ENCODE measurements at regions of chr15 and their contacts with region 1.

Region 1: DNA sequence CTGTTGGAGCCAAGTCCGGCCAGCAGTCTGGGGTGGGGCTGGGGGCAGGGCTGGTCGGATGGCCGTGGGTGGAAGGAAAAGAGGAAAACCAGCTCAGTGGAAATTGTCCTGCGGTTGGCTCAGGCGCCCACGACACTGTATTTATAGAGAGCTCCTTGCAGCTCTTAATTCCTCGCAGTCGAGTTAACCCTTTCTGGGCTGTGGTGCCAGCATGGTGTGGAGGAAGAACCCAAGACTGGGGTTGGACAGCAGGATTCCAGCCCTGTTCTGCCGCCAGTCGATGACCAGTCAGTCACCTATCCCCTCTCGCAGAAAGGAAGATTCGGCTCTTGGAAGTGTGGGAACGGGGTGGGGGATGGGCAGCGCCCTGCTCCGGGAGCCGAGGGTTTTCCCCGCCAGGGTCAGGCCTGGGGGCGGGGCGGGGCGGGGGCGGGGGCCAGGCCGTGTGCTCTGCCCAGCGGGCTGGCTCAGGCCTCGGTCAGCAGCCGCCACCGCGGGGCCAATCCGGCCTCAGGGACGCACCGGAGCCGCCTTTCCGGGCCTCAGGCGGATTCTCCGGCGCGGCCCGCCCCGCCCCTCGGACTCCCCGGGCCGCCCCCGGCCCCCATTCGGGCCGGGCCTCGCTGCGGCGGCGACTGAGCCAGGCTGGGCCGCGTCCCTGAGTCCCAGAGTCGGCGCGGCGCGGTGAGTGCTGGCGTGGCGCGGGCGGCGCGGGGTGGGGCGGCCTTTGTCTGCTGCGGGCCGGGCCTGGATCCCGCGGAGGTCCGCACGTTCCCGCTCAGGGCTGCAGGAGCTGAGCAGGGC is at the start of gene CD276:
- DNase-seq: no peak
- H3K4me3 ChIP-seq: peak within 1 kb of the TSS; percentile 84
- CTCF ChIP-seq: no peak

Region 2: DNA sequence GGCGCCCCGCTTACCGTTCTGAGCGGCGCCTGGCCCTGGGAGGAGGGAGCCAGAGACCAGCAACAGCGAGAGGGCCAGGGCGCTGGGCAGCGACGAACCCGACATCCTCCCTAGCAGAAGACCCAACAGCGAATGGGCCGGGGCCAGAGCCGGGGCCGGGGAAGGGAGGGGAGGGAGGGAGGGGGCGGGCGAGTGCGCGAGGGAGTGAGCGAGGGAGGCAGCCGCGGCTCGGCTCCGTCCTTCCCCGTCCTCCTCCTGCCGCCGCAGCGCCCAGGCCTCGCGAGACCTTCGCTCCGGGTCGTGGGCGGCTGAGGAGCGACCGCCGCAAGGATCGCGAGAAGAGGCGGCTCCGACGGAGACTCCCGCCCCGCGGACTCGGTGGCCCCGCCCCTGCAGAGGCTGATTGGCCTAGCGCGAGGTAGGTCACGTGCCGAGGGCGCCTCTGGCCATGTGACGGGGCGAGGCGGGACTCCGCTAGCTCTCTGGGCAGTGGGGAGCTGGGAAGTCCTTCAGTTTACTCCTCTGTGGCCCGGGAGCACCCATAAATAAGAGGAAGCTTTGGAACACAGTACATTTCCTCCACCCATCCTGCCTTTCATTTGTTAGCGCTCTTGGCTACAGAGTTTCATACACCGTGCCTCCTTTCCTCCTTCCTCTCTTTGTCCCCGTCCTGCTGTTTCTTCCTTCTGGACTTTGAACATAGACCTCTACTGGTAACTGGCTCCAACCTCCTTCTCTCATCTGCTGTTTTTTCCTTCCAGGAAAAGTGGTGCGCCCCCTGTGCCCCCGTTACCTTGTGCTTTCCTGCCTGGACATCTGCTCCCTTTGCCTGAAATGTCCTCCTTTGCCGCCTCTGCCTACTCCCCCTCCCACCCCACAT is 50.6 kb before region 1 on chr15 and contains the start of gene NPTN:
- in situ Hi-C with region 1: loop called (anchors 5 kb)
- DNase-seq: peak; percentile 92
- H3K4me3 ChIP-seq: peak within 1 kb of the TSS; percentile 83
- CTCF ChIP-seq: no peak

Region 3: DNA sequence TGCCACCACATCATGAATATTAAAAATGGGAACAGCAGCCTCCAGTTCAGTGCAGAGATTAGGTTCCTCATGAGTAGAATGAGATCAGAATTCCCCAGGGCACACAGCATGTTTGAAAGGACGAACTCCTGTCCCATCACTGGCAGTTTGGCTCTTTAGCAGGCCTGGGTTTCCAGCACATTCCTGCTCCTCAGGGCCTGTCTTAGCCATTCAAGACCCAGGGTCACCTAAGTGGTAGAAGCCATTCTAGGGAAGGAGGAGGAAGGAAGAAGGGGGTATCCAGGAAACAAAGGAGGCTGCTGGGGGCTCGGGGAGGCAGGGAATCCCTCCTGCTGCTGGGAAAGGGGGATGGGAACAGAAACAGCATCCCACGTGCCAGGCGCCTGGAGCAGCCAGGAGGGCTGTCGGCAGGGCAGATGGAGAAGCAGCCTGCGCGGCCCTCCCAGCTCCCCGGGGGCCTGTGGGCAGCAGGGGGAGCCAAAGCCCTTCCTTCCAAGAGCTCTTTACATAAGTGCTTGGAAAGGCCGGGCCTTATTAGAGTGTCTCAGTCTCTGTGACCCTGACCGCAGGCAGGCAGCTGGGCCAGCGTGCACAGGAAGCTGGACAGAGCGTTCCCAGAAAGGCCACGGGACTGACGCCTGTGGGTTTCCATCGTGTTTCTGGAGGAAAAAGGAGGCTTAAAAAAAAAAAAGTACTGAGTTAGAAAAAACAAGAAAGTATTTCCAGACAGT is 267.0 kb after region 1 on chr15:
- in situ Hi-C with region 1: no loop called
- DNase-seq: peak; percentile 97
- H3K4me3 ChIP-seq: no peak overlapping the region
- CTCF ChIP-seq: peak; percentile 82

Region 4: GRCh38 chr15:74062671-74063070 is 378.7 kb after region 1 on chr15:
- in situ Hi-C with region 1: no loop called
- DNase-seq: no peak
- H3K4me3 ChIP-seq: no peak overlapping the region
- CTCF ChIP-seq: no peak

Measured in astrocyte of the cerebellum (primary cell).